ENCODE measurements at regions of chrX and their contacts with region 1.

Region 1: GRCh38 chrX:12946838-12947544 is 27.9 kb upstream of the TMSB4X start:
- DNase-seq: peak; percentile 81
- ATAC-seq: peak; percentile 11
- H3K4me3 Mint-ChIP-seq: peak overlapping the region; percentile 38
- H3K27ac Mint-ChIP-seq: peak overlapping the region; percentile 94
- H3K4me1 Mint-ChIP-seq: peaks cover 54% of the 10 kb centered on the region
- H3K27me3 Mint-ChIP-seq: no peaks in the 10 kb centered on the region

Region 2: GRCh38 chrX:12339921-12340320 is 607.1 kb before region 1 on chrX:
- CTCF ChIA-PET with region 1: no interaction called
- POLR2A ChIA-PET with region 1: no interaction called
- intact Hi-C with region 1: no loop called
- DNase-seq: no peak
- ATAC-seq: no peak
- H3K4me3 Mint-ChIP-seq: no peak overlapping the region
- H3K27ac Mint-ChIP-seq: no peak overlapping the region
- H3K4me1 Mint-ChIP-seq: no peaks in the 10 kb centered on the region
- H3K27me3 Mint-ChIP-seq: no peaks in the 10 kb centered on the region

Region 3: GRCh38 chrX:12936947-12937346 is 10.0 kb before region 1 on chrX:
- CTCF ChIA-PET with region 1: interaction called, 17 read pairs
- POLR2A ChIA-PET with region 1: no interaction called
- intact Hi-C with region 1: no loop called
- DNase-seq: no peak
- ATAC-seq: no peak
- H3K4me3 Mint-ChIP-seq: no peak overlapping the region
- H3K27ac Mint-ChIP-seq: no peak overlapping the region
- H3K4me1 Mint-ChIP-seq: no peaks in the 10 kb centered on the region
- H3K27me3 Mint-ChIP-seq: no peaks in the 10 kb centered on the region

Region 4: GRCh38 chrX:12984629-12985319 is 37.8 kb after region 1 on chrX:
- CTCF ChIA-PET with region 1: interaction called, 8 read pairs
- POLR2A ChIA-PET with region 1: interaction called, 3 read pairs
- intact Hi-C with region 1: loop called in 1 of 2 experiments (anchors 5 kb)
- DNase-seq: peak; percentile 65
- ATAC-seq: peak; percentile 84
- H3K4me3 Mint-ChIP-seq: peak overlapping the region; percentile 28
- H3K27ac Mint-ChIP-seq: peak overlapping the region; percentile 89
- H3K4me1 Mint-ChIP-seq: peaks cover 70% of the 10 kb centered on the region
- H3K27me3 Mint-ChIP-seq: no peaks in the 10 kb centered on the region

Region 5: GRCh38 chrX:13078739-13079444 is 131.9 kb after region 1 on chrX:
- CTCF ChIA-PET with region 1: interaction called, 17 read pairs
- POLR2A ChIA-PET with region 1: interaction called, 5 read pairs
- intact Hi-C with region 1: no loop called
- DNase-seq: no peak
- ATAC-seq: no peak
- H3K4me3 Mint-ChIP-seq: peak overlapping the region; percentile 29
- H3K27ac Mint-ChIP-seq: peak overlapping the region; percentile 75
- H3K4me1 Mint-ChIP-seq: peaks cover 87% of the 10 kb centered on the region
- H3K27me3 Mint-ChIP-seq: no peaks in the 10 kb centered on the region

Region 6: DNA sequence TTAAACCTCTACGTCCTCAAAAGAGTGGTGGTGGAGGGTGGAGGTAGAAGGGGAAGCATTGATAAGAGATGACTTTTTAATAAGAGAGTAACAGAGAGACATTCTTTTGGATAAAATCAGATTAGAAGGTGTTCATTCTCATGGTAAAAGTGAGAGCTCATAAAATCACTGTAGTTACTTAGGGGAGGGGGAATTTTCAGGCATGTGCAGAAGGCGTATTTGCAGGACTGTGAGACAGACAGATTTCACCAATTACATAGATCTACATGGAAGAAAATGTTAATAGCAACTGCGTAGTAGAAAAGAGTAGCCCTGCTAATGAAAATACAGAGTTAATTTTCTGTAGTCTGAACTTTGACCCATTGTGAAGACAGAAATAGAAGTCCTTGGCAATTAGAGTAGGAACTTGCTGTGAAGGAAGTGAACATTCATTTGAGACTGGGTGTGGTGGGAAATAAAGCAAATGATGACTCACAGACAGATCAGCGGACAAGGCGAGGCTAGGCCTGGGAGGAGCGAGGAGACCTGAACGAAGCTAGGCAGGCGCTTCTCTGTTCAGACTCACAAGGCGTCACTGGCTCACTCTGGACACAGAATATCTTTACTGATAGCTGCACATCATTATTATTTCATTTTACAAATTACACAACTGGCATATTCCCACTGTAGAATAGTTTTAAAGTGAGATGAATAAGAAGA is 154.6 kb after region 1 on chrX:
- CTCF ChIA-PET with region 1: interaction called, 11 read pairs
- POLR2A ChIA-PET with region 1: no interaction called
- intact Hi-C with region 1: no loop called
- DNase-seq: peak; percentile 66
- ATAC-seq: peak; percentile 98
- H3K4me3 Mint-ChIP-seq: no peak overlapping the region
- H3K27ac Mint-ChIP-seq: peak overlapping the region; percentile 29
- H3K4me1 Mint-ChIP-seq: peaks cover 49% of the 10 kb centered on the region
- H3K27me3 Mint-ChIP-seq: no peaks in the 10 kb centered on the region

Region 7: GRCh38 chrX:13177921-13178566 is 231.1 kb after region 1 on chrX:
- CTCF ChIA-PET with region 1: interaction called, 11 read pairs
- POLR2A ChIA-PET with region 1: no interaction called
- intact Hi-C with region 1: no loop called
- DNase-seq: no peak
- ATAC-seq: peak; percentile 49
- H3K4me3 Mint-ChIP-seq: no peak overlapping the region
- H3K27ac Mint-ChIP-seq: no peak overlapping the region
- H3K4me1 Mint-ChIP-seq: peaks cover 12% of the 10 kb centered on the region
- H3K27me3 Mint-ChIP-seq: no peaks in the 10 kb centered on the region

Region 8: DNA sequence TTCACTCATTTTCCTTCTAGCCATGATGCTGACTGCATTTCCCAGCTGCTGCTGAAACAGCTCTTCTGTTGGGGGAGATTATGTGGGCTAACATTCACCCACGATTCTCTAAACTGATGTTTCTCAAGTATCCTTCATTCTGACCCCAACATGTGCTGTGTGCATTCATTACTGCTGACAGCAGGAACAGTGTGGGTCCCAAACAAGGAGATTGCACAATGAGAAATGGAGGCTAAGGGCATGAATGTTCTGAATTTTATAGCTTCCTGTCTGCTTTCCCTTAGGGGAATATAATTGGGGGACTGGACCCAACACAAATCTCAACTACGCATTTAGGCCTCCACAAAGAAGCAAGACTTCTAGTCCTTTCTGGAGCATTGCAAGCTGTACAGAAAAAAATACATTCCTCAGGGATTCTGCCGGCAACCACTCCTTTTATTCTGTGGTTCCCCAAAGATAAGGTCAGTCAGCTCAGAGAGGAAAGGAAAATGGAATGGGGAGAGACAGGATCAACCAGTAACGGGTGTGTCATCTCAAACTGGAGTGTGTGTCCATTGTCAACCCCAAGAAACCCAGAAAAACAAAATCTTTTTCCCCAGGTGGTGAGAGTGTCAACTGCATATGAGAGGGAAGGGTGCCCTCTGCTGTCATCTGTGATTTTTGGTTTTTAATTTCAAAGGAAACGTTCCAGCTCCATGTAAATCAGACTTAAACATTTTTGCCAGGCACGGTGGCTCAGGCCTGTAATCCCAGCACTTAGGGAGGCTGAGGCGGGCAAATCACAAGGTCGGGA is 540.9 kb after region 1 on chrX:
- CTCF ChIA-PET with region 1: interaction called, 38 read pairs
- POLR2A ChIA-PET with region 1: no interaction called
- intact Hi-C with region 1: loop called (anchors 1 kb)
- DNase-seq: peak; percentile 50
- ATAC-seq: peak; percentile 86
- H3K4me3 Mint-ChIP-seq: no peak overlapping the region
- H3K27ac Mint-ChIP-seq: peak overlapping the region; percentile 74
- H3K4me1 Mint-ChIP-seq: peaks cover 18% of the 10 kb centered on the region
- H3K27me3 Mint-ChIP-seq: no peaks in the 10 kb centered on the region